ENCODE measurements at regions of chr3 and their contacts with region 1.

Region 1: GRCh38 chr3:54374214-54374855 is 252.0 kb downstream of the CACNA2D3 start:
- DNase-seq: peak in 1 of 2 experiments; percentile 55
- H3K4me3 ChIP-seq: no peak overlapping the region
- H3K27ac ChIP-seq: no peak overlapping the region
- H3K4me1 ChIP-seq: no peaks in the 10 kb centered on the region
- H3K27me3 ChIP-seq: no peaks in the 10 kb centered on the region
- CTCF ChIP-seq: peak; percentile 61 to 78 (median 73)
- EP300 ChIP-seq: no peak
- POLR2A ChIP-seq: no peak
- RAD21 ChIP-seq: peak; percentile 87 to 88

Region 2: GRCh38 chr3:54358327-54358726 is 16.0 kb before region 1 on chr3:
- CTCF ChIA-PET with region 1: interaction called, 28 read pairs
- POLR2A ChIA-PET with region 1: interaction called, 3 read pairs
- DNase-seq: no peak
- H3K4me3 ChIP-seq: no peak overlapping the region
- H3K27ac ChIP-seq: no peak overlapping the region
- H3K4me1 ChIP-seq: peaks cover 0 to 2% (median 0%) of the 10 kb centered on the region in 4 experiments; a peak in 2 of 7 replicates
- H3K27me3 ChIP-seq: no peaks in the 10 kb centered on the region
- CTCF ChIP-seq: no peak
- EP300 ChIP-seq: no peak
- POLR2A ChIP-seq: no peak
- RAD21 ChIP-seq: no peak